SK-N-SH (cell line): ENCODE measurements at regions of chr11 and their contacts with region 1.

Region 1: GRCh38 chr11:57567515-57568329 is at the start of gene UBE2L6:
- DNase-seq: peak; percentile 91
- H3K4me3 ChIP-seq: peak within 1 kb of the TSS; percentile 82 to 96
- H3K27ac ChIP-seq: peak within 1 kb of the TSS; percentile 58 to 83; a peak in 3 of 4 replicates
- H3K4me1 ChIP-seq: peaks cover 0 to 12% of the 10 kb centered on the region in 2 experiments; a peak in 1 of 4 replicates
- H3K27me3 ChIP-seq: no peaks in the 10 kb centered on the region
- CTCF ChIP-seq: no peak; the same call in 1 of the 2 replicates
- EP300 ChIP-seq: no peak
- RAD21 ChIP-seq: no peak
- polyA plus RNA-seq, gene UBE2L6: 65.9 and 77.0 TPM in 2 replicates

Region 2: DNA sequence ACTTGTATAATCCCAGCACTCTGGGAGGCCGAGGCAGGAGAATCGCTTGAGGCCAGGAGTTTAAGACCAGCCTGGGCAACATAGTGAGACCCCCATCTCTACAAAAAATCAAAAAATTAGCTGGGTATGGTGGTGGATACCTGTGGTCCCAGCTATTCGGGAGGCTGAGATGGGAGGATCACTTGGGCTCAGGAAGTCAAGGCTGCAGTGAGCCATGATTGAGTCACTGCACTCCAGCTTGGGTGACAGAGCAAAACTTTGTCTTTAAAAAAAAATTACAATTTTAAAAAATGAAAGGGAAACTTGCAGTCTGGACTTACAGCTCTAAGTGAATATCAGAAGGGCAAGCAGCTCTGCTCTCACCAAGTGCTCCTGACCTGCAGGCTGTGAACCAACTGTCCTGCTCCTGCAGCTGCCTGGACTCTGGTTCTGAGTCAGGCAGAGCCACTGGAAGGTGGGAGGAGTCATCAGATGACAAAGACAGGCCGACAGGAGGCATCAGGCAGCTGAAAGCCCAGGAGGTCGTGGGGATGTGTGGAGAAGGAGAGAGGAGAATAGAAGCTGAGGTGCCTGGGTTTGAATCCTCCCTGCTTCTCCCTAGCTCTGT is 20.8 kb before region 1 on chr11:
- CTCF ChIA-PET with region 1: interaction called, 36 read pairs
- POLR2A ChIA-PET with region 1: no interaction called
- DNase-seq: peak; percentile 35
- H3K4me3 ChIP-seq: no peak overlapping the region
- H3K27ac ChIP-seq: no peak overlapping the region
- H3K4me1 ChIP-seq: no peaks in the 10 kb centered on the region; a peak in 1 of 4 replicates
- H3K27me3 ChIP-seq: no peaks in the 10 kb centered on the region
- CTCF ChIP-seq: no peak
- EP300 ChIP-seq: no peak
- RAD21 ChIP-seq: no peak

Region 3: DNA sequence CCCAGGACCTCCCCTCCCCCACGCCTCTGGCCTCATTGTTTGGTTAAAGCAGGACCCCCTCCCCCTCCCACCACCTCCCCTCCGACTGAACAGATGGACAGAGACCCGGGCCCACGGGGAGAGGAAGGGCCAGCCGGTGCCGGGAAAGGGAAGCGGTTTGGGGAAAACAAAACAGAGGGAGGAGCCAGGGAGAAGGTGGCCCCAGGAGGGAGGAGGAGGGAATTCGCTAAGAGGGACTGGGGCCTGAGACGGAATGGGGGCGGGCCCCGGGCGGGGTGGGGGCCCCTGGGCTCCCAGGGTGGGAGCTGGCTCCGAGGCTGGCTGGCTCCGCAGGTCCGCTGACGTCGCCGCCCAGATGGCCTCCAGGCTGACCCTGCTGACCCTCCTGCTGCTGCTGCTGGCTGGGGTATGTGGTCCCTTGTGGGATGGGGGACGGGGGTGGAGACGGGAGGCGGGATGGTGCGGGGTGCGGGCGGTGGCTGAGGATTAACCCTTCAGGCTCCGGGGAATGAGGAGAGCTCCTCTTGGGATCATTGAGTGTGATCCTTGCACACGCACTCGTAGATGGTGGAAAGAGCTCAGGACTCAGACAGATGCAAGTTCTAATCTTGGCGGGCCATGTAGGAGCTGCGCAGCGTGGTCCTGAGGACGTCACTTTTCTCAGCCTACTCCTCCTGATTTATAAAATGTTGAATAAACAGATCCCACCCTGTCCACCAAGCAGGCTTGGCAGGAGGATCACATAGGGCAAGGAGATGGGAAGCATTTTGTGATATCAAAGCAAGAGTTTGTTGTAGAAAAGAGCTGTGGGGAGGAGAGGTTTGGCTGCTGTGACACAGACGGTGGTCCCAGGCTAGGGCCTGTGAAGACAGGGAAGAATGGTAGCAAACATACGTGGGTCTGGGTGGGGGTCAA is 30.5 kb after region 1 on chr11:
- CTCF ChIA-PET with region 1: interaction called, 39 read pairs
- POLR2A ChIA-PET with region 1: interaction called, 3 read pairs
- DNase-seq: peak; percentile 90
- H3K4me3 ChIP-seq: peak overlapping the region in 1 of 2 experiments; percentile 41; a peak in 2 of 4 replicates
- H3K27ac ChIP-seq: peak overlapping the region in 1 of 2 experiments; percentile 11; a peak in 1 of 4 replicates
- H3K4me1 ChIP-seq: peaks cover 0 to 11% of the 10 kb centered on the region in 2 experiments; a peak in 1 of 4 replicates
- H3K27me3 ChIP-seq: 0 out of 2 replicates have a peak, but pooled peaks cover 8% of the 10 kb centered on the region
- CTCF ChIP-seq: no peak
- EP300 ChIP-seq: no peak
- RAD21 ChIP-seq: no peak

Region 4: GRCh38 chr11:57630193-57630592 is 62.5 kb after region 1 on chr11:
- CTCF ChIA-PET with region 1: interaction called, 326 read pairs
- POLR2A ChIA-PET with region 1: no interaction called
- DNase-seq: no peak
- H3K4me3 ChIP-seq: no peak overlapping the region
- H3K27ac ChIP-seq: no peak overlapping the region
- H3K4me1 ChIP-seq: no peaks in the 10 kb centered on the region
- H3K27me3 ChIP-seq: peaks cover 6% of the 10 kb centered on the region; the same call in 1 of the 2 replicates
- CTCF ChIP-seq: no peak
- EP300 ChIP-seq: no peak
- RAD21 ChIP-seq: no peak

Region 5: DNA sequence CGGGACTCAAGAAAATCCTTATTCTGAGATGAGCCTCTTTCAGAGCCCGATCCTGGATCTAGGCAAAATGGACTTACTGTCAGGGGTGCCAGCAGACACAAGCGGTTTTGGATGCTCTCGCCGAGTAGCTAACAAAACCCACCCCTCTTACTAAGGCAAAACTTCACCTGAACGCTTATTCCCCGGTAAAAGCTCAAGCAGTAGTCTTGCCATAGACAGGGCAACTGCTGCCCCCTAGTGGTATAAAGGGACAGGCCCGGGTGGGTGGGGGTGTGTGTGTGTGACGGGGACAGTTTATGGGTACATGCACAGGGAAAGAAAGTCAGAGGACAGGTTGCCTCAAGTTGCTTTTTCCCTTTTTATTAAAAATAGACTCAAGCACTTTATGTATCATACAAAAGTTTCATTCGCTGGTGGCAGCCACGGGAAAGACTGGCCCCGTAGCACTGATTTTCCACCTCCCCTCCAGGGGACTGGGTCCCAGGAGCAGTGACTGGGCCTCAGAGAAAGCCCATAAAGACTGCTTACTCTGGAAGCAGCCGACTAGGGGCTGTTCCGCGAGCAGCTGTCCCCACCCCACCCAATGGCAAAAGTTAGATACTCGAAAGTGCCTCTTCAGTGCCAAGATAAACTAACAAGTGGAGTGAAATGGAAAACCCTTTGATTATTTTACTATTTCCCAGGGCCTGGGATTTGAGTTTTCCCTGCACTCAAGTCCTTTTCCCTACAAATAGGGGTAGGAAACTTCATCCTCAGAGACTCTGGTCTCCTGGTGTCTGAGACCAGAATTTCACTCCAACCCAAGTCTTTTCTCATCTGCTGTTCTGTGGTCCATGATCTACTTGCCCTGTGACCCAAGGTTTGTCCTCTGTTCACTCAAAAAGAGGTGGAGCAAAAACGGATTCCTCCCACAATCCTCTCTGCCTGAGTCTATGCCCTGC is 77.3 kb after region 1 on chr11:
- CTCF ChIA-PET with region 1: interaction called, 326 read pairs
- POLR2A ChIA-PET with region 1: interaction called, 24 read pairs
- DNase-seq: peak; percentile 87
- H3K4me3 ChIP-seq: peak overlapping the region in 1 of 2 experiments; percentile 36; a peak in 1 of 4 replicates
- H3K27ac ChIP-seq: no peak overlapping the region
- H3K4me1 ChIP-seq: peaks cover 27 to 30% of the 10 kb centered on the region in 2 experiments; a peak in 3 of 4 replicates
- H3K27me3 ChIP-seq: no peaks in the 10 kb centered on the region
- CTCF ChIP-seq: peak; percentile 87
- EP300 ChIP-seq: no peak
- RAD21 ChIP-seq: peak; percentile 78

Region 6: DNA sequence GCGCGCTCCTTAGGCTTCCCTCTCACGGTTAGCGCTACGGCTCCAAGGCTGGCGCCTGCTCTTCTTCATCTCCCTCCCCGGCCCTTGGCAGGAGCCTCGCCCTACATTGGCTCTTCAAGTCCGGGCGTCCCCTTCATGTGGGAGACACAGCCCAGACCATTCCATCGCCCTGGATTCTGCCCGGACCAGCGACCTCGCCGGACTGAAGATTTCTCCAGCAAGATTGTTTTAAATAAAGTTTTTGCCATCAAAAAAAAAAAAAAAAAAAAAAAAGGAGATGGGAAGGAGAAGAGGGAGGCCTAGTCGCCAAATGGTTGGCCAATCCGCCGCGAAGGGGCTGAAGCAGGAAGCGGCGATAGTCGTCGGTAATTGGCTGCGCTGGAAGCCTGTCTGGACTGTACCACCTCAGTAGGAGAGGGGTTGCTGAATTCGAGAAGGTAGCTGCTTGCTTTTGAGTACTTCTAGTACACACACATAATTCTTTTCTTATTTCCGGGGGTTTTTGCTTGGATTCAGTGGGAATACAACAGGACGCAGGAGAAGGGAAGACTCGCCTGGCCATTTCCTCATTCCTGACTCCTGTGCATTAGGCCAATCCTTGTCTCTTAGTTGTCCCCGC is 99.5 kb after region 1 on chr11:
- CTCF ChIA-PET with region 1: interaction called, 12 read pairs
- POLR2A ChIA-PET with region 1: no interaction called
- DNase-seq: peak; percentile 90
- H3K4me3 ChIP-seq: peak overlapping the region; percentile 78 to 85
- H3K27ac ChIP-seq: peak overlapping the region; percentile 93 to 97
- H3K4me1 ChIP-seq: peaks cover 9 to 12% of the 10 kb centered on the region in 2 experiments; a peak in 3 of 4 replicates
- H3K27me3 ChIP-seq: no peaks in the 10 kb centered on the region
- CTCF ChIP-seq: no peak
- EP300 ChIP-seq: no peak
- RAD21 ChIP-seq: no peak